ENCODE measurements at regions of chr7 and their contacts with region 1.

Region 1: GRCh38 chr7:37833107-37833817 is 15.1 kb upstream of the NME8 start:
- DNase-seq: peak in 1 of 2 donors; percentile 25
- ATAC-seq: no peak

Region 2: GRCh38 chr7:37211097-37211880 is 622.0 kb before region 1 on chr7:
- intact Hi-C with region 1: loop called in 1 of 2 experiments (anchors 10 kb)
- DNase-seq: no peak
- ATAC-seq: no peak

Region 3: DNA sequence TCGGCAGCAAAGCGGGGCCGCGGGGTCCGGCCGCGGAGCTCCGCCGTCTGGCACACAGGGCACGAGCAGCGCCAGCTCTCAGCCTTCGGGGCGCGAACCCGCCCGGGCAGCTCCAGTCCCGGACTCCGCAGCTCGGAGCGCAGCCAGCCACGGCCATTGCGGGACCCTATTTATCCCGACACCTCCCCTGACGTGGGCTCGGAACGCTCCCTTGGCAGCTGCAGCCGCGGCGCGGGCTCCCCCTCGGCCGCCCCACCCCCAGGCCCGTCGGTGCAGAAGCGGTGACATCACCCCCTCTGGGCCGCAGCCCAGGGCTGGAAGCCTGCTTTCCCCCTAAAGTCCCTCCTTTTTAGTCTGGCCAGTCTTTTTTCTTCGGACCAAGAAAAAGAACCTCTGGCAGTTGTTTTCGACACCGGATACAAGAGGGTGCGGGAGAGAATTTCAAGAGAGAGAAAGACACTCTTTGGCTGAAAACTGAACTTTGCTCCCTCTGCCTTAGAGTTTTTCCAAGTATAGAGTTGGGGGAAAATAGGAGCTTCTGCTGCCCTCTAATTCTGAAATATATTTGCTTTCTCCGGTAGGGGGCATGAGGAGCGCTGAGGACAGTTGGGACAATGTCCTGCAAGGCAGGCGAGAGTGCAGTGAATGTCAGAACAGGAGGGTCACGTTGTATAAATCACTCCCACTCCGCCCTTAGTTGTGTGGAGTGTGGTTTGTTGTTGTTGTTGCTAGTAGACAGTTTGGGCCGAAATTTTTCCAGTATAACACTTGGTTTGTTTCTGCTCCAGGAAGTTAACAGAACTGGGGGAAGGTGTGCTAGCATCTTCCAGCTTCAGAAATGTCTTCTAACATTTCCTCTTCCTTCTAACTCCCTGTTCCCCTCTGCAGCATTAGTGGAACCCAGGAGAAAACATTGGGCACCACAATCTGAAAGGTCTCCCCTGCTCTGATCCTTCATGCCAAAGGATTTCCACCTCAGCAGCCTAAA is 83.7 kb after region 1 on chr7 and contains the start of gene SFRP4:
- intact Hi-C with region 1: no loop called
- DNase-seq: peak; percentile 24 to 43
- ATAC-seq: peak; percentile 54
- total RNA-seq, gene SFRP4: 0.39 to 0.43 TPM

Region 4: GRCh38 chr7:38086857-38087256 is 253.6 kb after region 1 on chr7:
- intact Hi-C with region 1: no loop called
- DNase-seq: no peak
- ATAC-seq: no peak

Region 5: GRCh38 chr7:38311329-38311937 is 478.2 kb after region 1 on chr7:
- intact Hi-C with region 1: no loop called
- DNase-seq: peak; percentile 32 to 44
- ATAC-seq: peak; percentile 64

Measured in left colon (tissue), 2 donors.